MCF 10A (cell line): ENCODE measurements at regions of chr14 and their contacts with region 1.

Region 1: GRCh38 chr14:61561657-61562276 is 133.5 kb upstream of the HIF1A start:
- DNase-seq: peak; percentile 97
- H3K4me3 Mint-ChIP-seq: peak overlapping the region; percentile 3
- H3K27ac Mint-ChIP-seq: peak overlapping the region; percentile 86
- H3K4me1 Mint-ChIP-seq: peaks cover 56% of the 10 kb centered on the region
- H3K27me3 Mint-ChIP-seq: no peaks in the 10 kb centered on the region
- CTCF ChIP-seq: no peak

Region 2: DNA sequence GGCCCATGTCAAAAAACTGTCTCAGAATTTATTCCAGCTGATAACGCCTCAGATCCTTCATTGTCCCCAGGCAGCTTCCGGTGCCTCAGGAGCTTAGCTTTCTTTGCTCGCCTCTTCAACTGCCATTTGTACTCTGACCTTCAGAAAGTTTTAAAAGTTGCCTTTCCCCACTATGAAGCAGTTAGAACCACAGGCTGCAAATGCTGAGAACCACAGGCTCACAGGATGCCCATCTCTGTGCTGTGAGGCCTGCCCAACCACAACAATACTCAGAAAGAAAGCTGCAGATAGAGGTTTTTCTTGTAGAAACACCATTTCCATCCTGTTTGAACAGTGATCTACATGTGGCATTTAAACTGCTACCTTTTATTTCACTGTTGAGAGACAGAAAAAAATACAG is 109.3 kb before region 1 on chr14:
- CTCF ChIA-PET with region 1: no interaction called
- POLR2A ChIA-PET with region 1: no interaction called
- intact Hi-C with region 1: no loop called
- DNase-seq: no peak
- H3K4me3 Mint-ChIP-seq: no peak overlapping the region
- H3K27ac Mint-ChIP-seq: no peak overlapping the region
- H3K4me1 Mint-ChIP-seq: no peaks in the 10 kb centered on the region
- H3K27me3 Mint-ChIP-seq: no peaks in the 10 kb centered on the region
- CTCF ChIP-seq: no peak

Region 3: GRCh38 chr14:61512026-61512834 is 49.5 kb before region 1 on chr14:
- CTCF ChIA-PET with region 1: no interaction called
- POLR2A ChIA-PET with region 1: interaction called, 27 read pairs
- intact Hi-C with region 1: no loop called
- DNase-seq: peak; percentile 83
- H3K4me3 Mint-ChIP-seq: peak overlapping the region; percentile 38
- H3K27ac Mint-ChIP-seq: peak overlapping the region; percentile 61
- H3K4me1 Mint-ChIP-seq: peaks cover 19% of the 10 kb centered on the region
- H3K27me3 Mint-ChIP-seq: no peaks in the 10 kb centered on the region
- CTCF ChIP-seq: no peak

Region 4: GRCh38 chr14:61547186-61548086 is 14.3 kb before region 1 on chr14:
- CTCF ChIA-PET with region 1: interaction called, 7 read pairs
- POLR2A ChIA-PET with region 1: interaction called, 41 read pairs
- intact Hi-C with region 1: no loop called
- DNase-seq: peak; percentile 86
- H3K4me3 Mint-ChIP-seq: no peak overlapping the region
- H3K27ac Mint-ChIP-seq: peak overlapping the region; percentile 69
- H3K4me1 Mint-ChIP-seq: peaks cover 20% of the 10 kb centered on the region
- H3K27me3 Mint-ChIP-seq: no peaks in the 10 kb centered on the region
- CTCF ChIP-seq: no peak

Region 5: GRCh38 chr14:61585598-61586543 is 24.1 kb after region 1 on chr14:
- CTCF ChIA-PET with region 1: interaction called, 3 read pairs
- POLR2A ChIA-PET with region 1: interaction called, 24 read pairs
- intact Hi-C with region 1: no loop called
- DNase-seq: peak; percentile 77
- H3K4me3 Mint-ChIP-seq: no peak overlapping the region
- H3K27ac Mint-ChIP-seq: peak overlapping the region; percentile 65
- H3K4me1 Mint-ChIP-seq: peaks cover 35% of the 10 kb centered on the region
- H3K27me3 Mint-ChIP-seq: no peaks in the 10 kb centered on the region
- CTCF ChIP-seq: no peak

Region 6: GRCh38 chr14:61662437-61663311 is 100.9 kb after region 1 on chr14:
- CTCF ChIA-PET with region 1: no interaction called
- POLR2A ChIA-PET with region 1: interaction called, 18 read pairs
- intact Hi-C with region 1: no loop called
- DNase-seq: peak; percentile 80
- H3K4me3 Mint-ChIP-seq: peak overlapping the region; percentile 31
- H3K27ac Mint-ChIP-seq: peak overlapping the region; percentile 85
- H3K4me1 Mint-ChIP-seq: peaks cover 29% of the 10 kb centered on the region
- H3K27me3 Mint-ChIP-seq: no peaks in the 10 kb centered on the region
- CTCF ChIP-seq: no peak

Region 7: DNA sequence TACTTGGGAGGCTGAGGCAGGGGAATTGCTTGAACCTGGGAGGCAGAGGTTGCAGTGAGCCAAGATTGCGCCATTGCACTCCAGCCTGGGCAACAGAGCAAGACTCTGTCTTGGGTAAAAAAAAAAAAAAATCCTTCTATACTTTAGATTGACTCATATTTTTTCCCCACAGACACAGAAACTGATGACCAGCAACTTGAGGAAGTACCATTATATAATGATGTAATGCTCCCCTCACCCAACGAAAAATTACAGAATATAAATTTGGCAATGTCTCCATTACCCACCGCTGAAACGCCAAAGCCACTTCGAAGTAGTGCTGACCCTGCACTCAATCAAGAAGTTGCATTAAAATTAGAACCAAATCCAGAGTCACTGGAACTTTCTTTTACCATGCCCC is 176.1 kb after region 1 on chr14:
- CTCF ChIA-PET with region 1: no interaction called
- POLR2A ChIA-PET with region 1: no interaction called
- intact Hi-C with region 1: no loop called
- DNase-seq: no peak
- H3K4me3 Mint-ChIP-seq: no peak overlapping the region
- H3K27ac Mint-ChIP-seq: no peak overlapping the region
- H3K4me1 Mint-ChIP-seq: no peaks in the 10 kb centered on the region
- H3K27me3 Mint-ChIP-seq: no peaks in the 10 kb centered on the region
- CTCF ChIP-seq: no peak

Region 8: GRCh38 chr14:61841145-61841544 is 279.4 kb after region 1 on chr14:
- CTCF ChIA-PET with region 1: no interaction called
- POLR2A ChIA-PET with region 1: no interaction called
- intact Hi-C with region 1: no loop called
- DNase-seq: peak; percentile 13
- H3K4me3 Mint-ChIP-seq: no peak overlapping the region
- H3K27ac Mint-ChIP-seq: no peak overlapping the region
- H3K4me1 Mint-ChIP-seq: no peaks in the 10 kb centered on the region
- H3K27me3 Mint-ChIP-seq: no peaks in the 10 kb centered on the region
- CTCF ChIP-seq: no peak